ENCODE measurements at regions of chr18 and their contacts with region 1.

Region 1: GRCh38 chr18:5073026-5073944 is 123.8 kb downstream of the AKAIN1 start:
- DNase-seq: no peak

Region 2: GRCh38 chr18:5175378-5175777 is 102.1 kb after region 1 on chr18:
- intact Hi-C with region 1: no loop called
- DNase-seq: no peak

Region 3: GRCh38 chr18:6891788-6892187 is 1818.5 kb after region 1 on chr18:
- intact Hi-C with region 1: loop called (anchors 10 kb)
- DNase-seq: no peak